Activated CD4-positive, alpha-beta memory T cell treated with anti-CD3 and anti-CD28 coated beads for 36 hours (primary cell): ENCODE measurements at regions of chr9 and their contacts with region 1.

Region 1: GRCh38 chr9:124940693-124941453 is at the start of gene GOLGA1:
- DNase-seq: peak; percentile 95
- H3K4me3 Mint-ChIP-seq: peak within 1 kb of the TSS; percentile 79
- H3K27ac Mint-ChIP-seq: peak within 1 kb of the TSS; percentile 89
- H3K4me1 Mint-ChIP-seq: peaks cover 24% of the 10 kb centered on the region
- H3K27me3 Mint-ChIP-seq: no peaks in the 10 kb centered on the region
- total RNA-seq, gene GOLGA1: 14.1 to 15.3 TPM

Region 2: DNA sequence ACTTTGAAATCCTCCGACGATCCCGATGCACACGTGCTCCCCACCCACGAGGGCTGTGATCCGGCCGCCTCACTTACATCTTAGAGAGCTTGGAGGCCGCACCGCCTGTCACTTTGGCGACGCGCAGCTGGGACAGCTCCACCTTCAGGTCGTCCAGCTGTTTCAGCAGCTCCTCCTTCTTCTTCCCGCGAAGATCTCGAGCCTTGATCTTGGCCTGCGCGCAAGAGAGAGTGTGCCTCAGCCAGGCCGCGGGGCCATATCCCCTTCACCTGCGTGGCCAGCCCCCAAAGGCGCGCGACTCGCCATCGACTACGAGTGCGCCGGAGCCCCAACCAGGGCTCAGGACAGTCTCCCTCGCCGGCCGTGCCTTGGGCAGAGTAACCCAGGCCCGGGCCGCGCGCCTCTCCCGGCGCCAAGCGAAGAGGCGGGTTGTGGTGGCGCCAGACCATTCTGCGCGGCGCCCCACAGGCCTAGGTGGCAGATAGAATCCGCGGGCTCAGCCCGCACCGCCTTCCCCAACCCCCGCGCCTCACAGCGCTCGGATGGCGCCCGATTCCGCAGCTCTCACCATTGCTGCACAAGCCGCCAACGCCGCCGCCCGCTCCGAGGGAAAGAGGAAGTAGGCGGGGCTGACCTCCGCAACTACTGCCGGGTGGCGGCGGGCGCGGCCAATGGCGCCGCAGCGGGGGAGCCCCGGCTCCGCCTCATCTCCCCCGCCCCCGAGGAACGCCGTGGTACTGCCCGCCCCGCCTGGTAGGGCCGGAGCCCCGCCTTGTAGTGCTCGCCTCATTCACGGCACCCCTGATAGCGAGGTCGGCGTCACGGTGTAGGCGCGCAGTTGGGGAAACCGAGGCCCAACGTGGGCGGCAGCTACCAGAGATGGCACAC is 79.3 kb before region 1 on chr9 and contains the starts of genes ARPC5L and RPL35:
- CTCF ChIA-PET with region 1: no interaction called
- POLR2A ChIA-PET with region 1: interaction called, 3 read pairs
- intact Hi-C with region 1: loop called (anchors 2 kb)
- DNase-seq: peak; percentile 96
- H3K4me3 Mint-ChIP-seq: peak within 1 kb of the TSS; percentile 88
- H3K27ac Mint-ChIP-seq: peak within 1 kb of the TSS; percentile 94
- H3K4me1 Mint-ChIP-seq: peaks cover 42% of the 10 kb centered on the region
- H3K27me3 Mint-ChIP-seq: no peaks in the 10 kb centered on the region
- total RNA-seq, gene ARPC5L: 104 to 108 TPM
- total RNA-seq, gene RPL35: 2,083 to 2,096 TPM

Region 3: GRCh38 chr9:124964604-124965003 is 23.7 kb after region 1 on chr9:
- CTCF ChIA-PET with region 1: no interaction called
- POLR2A ChIA-PET with region 1: no interaction called
- intact Hi-C with region 1: loop called (anchors 2 kb)
- DNase-seq: no peak
- H3K4me3 Mint-ChIP-seq: no peak overlapping the region
- H3K27ac Mint-ChIP-seq: peak overlapping the region; percentile 89
- H3K4me1 Mint-ChIP-seq: peaks cover 27% of the 10 kb centered on the region
- H3K27me3 Mint-ChIP-seq: no peaks in the 10 kb centered on the region

Region 4: GRCh38 chr9:125143375-125144090 is 202.7 kb after region 1 on chr9 and contains the start of gene SCAI:
- CTCF ChIA-PET with region 1: no interaction called
- POLR2A ChIA-PET with region 1: no interaction called
- intact Hi-C with region 1: loop called (anchors 1 kb)
- DNase-seq: peak; percentile 99
- H3K4me3 Mint-ChIP-seq: peak within 1 kb of the TSS; percentile 82
- H3K27ac Mint-ChIP-seq: peak within 1 kb of the TSS; percentile 24
- H3K4me1 Mint-ChIP-seq: peaks cover 31% of the 10 kb centered on the region
- H3K27me3 Mint-ChIP-seq: no peaks in the 10 kb centered on the region
- total RNA-seq, gene SCAI: 9.0 to 10.8 TPM

Region 5: DNA sequence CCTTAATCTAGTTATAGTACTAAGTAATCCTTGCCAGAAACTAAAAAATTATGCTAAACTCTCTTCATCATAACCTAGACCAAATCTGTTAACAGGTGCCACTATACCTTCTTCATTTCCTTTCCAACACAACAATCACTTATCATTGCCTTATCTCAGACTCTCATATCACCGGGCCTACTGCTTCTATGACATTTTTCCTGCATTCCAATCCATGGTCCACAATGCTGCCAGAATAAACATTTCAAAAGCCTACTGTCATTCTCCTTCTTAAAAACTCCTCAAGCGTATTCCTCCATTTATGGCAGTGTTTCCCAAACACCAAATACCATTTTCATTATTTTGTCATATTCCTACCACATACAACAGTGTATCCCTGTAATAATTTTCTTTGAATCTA is 242.2 kb after region 1 on chr9:
- CTCF ChIA-PET with region 1: no interaction called
- POLR2A ChIA-PET with region 1: no interaction called
- intact Hi-C with region 1: no loop called
- DNase-seq: no peak
- H3K4me3 Mint-ChIP-seq: no peak overlapping the region
- H3K27ac Mint-ChIP-seq: no peak overlapping the region
- H3K4me1 Mint-ChIP-seq: peaks cover 62% of the 10 kb centered on the region
- H3K27me3 Mint-ChIP-seq: no peaks in the 10 kb centered on the region

Region 6: DNA sequence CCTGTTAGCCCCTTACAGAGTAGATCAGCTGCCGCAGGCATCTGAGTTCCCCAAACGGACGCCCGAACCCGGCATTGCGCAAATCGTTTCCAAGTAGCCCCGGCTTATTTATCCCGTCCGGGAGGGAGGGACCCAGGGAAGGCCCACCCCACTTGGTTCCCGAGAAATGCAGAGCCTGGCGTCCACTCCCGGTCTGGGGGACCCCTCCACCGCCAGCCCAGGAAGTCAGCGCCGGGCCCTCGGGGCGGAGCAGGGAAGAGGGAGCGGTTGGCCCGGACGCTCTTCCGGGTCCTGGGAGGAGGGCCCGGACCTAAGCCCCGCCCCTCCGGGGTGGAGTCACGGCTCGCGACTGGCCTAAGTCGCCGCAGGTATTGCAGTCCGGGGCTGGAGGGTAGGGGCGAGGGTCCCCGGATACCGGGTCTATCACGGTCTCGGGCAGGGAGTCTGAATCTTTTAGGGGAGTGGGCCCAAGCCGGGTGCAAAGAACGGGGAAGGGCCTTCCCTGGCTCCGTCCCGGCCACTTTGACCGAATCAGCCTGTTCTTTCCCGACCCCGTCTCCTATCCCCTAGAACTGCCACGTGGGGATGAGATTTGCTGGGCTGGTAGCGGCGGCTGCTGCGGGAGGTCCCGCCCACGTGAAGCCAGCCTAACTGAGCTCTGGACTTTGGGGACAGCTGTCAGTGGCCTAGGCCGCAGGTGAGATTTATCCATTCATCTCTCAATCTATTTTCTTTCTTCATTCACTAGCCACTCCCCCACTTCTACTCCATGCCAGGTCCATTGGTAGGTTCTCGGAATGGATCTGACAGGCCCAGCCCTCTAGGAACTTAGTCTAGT is 259.6 kb after region 1 on chr9 and contains the start of gene RABEPK:
- CTCF ChIA-PET with region 1: no interaction called
- POLR2A ChIA-PET with region 1: no interaction called
- intact Hi-C with region 1: loop called (anchors 2 kb)
- DNase-seq: peak; percentile 94
- H3K4me3 Mint-ChIP-seq: peak within 1 kb of the TSS; percentile 90
- H3K27ac Mint-ChIP-seq: peak within 1 kb of the TSS; percentile 84
- H3K4me1 Mint-ChIP-seq: peaks cover 34% of the 10 kb centered on the region
- H3K27me3 Mint-ChIP-seq: no peaks in the 10 kb centered on the region
- total RNA-seq, gene RABEPK: 20.7 to 21.9 TPM